OCI-LY7 (cell line): ENCODE measurements at regions of chrX and their contacts with region 1.

Region 1: GRCh38 chrX:40097497-40098263 is at the start of gene BCOR:
- DNase-seq: peak; percentile 74
- H3K4me3 ChIP-seq: peak within 1 kb of the TSS; percentile 90
- H3K27ac ChIP-seq: peak within 1 kb of the TSS; percentile 99
- H3K4me1 ChIP-seq: peaks cover 55% of the 10 kb centered on the region
- CTCF ChIP-seq: no peak
- total RNA-seq, gene BCOR: 55.6 and 64.3 TPM in 2 replicates

Region 2: DNA sequence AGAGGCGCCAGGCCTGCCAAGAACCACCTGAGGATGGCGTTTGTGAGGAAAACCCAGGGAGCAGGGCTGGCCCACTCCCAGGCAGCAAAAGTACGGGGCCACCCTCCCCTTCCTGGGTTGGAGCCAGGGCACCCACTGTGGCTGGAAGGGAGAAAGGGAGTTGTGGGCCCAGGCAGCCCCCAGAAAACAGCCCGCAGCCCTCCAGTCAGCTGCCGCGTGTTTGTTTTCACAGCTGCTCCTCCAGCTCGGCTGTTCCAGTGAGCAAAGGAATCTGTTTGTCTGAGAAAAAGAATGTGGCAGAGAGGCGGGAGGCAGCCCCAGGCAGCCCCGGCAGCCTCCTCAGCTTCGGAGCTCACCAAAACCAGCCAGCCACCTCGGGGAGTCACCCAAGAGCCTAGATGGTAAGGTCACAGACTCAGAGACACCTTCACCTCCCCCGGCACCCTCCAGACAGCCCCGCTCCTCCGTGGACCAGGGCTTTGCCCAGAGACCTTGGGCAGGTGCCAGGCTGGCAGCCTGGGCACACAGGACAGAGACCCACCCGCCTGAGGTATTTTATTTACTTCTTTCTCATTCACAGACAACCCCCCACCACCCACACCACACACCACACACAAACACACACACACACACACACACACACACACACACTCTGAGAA is 338.0 kb before region 1 on chrX:
- CTCF ChIA-PET with region 1: no interaction called
- POLR2A ChIA-PET with region 1: interaction called, 5 read pairs
- intact Hi-C with region 1: loop called (anchors 2 kb)
- DNase-seq: no peak
- H3K4me3 ChIP-seq: no peak overlapping the region
- H3K27ac ChIP-seq: peak overlapping the region; percentile 47
- H3K4me1 ChIP-seq: peaks cover 91% of the 10 kb centered on the region
- CTCF ChIP-seq: no peak

Region 3: DNA sequence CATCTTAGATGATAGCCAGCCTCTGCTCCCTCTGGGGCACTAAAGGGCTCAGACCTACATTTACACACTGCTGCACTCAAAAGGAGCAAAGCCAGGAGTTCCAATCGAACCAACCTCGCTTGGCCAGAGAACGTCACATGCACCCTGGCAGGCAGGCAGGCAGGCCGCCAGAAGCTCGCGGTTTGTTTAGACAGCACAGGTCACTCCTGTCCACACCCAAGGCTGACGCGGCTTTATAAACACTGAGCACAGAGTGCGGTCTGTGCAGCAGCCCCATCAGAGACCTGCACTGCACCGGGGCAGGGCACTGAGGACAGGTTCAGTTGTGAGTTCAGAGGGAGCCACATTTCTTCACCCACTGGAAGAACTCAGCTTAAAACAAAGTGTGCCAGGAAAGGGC is 143.8 kb before region 1 on chrX:
- CTCF ChIA-PET with region 1: no interaction called
- POLR2A ChIA-PET with region 1: no interaction called
- intact Hi-C with region 1: loop called (anchors 10 kb)
- DNase-seq: no peak
- H3K4me3 ChIP-seq: peak overlapping the region; percentile 34
- H3K27ac ChIP-seq: peak overlapping the region; percentile 95
- H3K4me1 ChIP-seq: peaks cover 66% of the 10 kb centered on the region
- CTCF ChIP-seq: no peak

Region 4: DNA sequence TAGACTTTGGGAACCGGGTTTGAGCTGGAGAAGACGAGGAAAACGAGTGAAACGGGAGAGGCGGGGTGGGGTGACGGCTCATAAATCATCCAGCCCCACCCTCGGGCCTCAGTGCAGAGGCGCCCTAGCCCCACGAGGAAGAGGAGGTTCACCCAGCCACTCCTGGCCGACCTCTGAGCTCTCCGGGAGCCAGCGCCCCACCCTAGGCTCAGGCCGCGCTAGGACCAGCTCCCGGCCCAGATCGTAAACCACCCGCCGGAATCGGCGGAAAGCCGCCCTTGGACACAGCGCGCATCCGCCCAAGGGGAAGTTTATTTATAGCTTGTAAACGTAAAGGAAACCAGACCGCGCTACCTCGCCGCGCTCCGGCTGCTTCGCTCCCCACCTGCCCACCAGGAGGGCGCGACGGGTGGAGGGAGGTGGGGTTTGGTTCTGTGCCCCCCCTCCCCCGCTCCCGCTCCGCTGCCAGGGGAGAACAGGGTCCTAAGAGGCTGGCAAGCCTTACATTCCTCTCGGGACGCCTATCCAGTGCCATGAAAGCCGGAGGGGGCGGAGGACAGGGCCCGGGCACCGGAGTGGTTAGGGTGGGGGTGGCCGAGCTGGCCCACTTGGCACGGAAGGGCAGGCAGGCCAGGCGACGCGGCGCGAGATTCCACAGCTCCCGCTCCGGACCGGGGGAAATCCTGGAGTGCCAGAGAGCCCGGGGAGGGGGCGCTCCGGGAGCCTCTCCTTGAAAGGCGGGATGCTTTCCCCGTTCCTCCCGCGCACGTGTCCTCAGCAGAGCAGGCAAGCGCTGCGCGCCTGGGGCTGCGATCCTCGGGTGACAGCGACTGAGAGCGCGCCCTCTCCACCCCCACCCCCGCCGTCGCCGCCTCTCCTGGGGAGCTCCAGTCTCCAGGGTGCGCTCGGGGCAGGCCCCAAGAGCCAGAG is 84.1 kb before region 1 on chrX:
- CTCF ChIA-PET with region 1: no interaction called
- POLR2A ChIA-PET with region 1: interaction called, 3 read pairs
- intact Hi-C with region 1: loop called (anchors 2 kb)
- DNase-seq: peak; percentile 77
- H3K4me3 ChIP-seq: peak overlapping the region; percentile 73
- H3K27ac ChIP-seq: peak overlapping the region; percentile 0
- H3K4me1 ChIP-seq: peaks cover 27% of the 10 kb centered on the region
- CTCF ChIP-seq: no peak

Region 5: GRCh38 chrX:40127052-40127451 is 29.4 kb after region 1 on chrX:
- CTCF ChIA-PET with region 1: no interaction called
- POLR2A ChIA-PET with region 1: interaction called, 5 read pairs
- intact Hi-C with region 1: loop called (anchors 2 kb)
- DNase-seq: peak; percentile 92
- H3K4me3 ChIP-seq: no peak overlapping the region
- H3K27ac ChIP-seq: peak overlapping the region; percentile 97
- H3K4me1 ChIP-seq: peaks cover 29% of the 10 kb centered on the region
- CTCF ChIP-seq: no peak

Region 6: DNA sequence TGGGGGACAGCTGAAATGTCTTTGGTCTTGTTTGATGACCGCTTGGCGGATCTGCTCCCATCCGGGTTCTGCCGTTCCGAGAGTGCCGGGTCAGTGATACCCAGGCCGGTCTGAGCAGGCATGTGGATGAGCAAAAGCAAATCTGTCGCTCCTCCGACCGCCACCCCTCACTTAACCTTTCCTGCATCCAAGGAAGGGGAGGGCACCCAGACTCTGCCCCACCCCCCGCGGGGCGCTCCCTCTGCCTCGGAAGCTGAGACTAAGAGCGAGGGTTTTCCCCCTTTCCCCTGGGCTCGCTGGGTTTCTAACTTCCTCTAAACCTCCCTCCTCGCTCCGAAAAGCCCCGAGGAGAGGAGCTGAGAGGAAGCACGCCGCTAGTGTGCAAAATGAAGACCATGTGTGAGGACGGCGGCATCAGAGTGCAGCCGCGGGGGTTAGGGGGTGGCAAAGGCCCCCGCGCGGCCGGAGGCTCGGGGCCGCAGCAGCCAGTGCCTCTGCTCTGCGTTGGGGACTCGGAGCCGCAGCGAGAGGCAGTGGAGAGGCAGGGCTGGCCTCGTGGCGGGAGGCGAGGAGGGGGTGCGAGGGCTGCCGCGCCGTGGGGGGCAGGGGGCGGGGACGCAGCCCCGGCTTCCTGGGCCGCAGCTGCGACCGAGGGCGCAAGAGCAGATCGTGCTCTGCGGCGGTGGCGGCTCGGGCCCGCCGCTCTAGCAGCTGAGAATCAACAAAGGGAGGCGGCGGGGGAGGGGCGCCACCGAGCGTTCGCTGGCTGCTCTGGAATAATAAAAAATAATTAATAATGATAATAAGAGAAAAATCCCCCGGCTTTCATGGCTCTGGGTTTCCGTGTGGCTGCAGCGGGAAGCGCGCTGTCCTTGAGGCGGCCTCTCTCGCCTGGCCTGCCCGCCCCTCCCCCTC is 55.9 kb after region 1 on chrX:
- CTCF ChIA-PET with region 1: no interaction called
- POLR2A ChIA-PET with region 1: interaction called, 10 read pairs
- intact Hi-C with region 1: loop called (anchors 2 kb)
- DNase-seq: peak; percentile 79
- H3K4me3 ChIP-seq: peak overlapping the region; percentile 67
- H3K27ac ChIP-seq: peak overlapping the region; percentile 94
- H3K4me1 ChIP-seq: peaks cover 73% of the 10 kb centered on the region
- CTCF ChIP-seq: peak; percentile 38; the same call in 1 of the 2 replicates